Heart right ventricle (tissue), 16 donors: ENCODE measurements at regions of chr20 and their contacts with region 1.

Region 1: DNA sequence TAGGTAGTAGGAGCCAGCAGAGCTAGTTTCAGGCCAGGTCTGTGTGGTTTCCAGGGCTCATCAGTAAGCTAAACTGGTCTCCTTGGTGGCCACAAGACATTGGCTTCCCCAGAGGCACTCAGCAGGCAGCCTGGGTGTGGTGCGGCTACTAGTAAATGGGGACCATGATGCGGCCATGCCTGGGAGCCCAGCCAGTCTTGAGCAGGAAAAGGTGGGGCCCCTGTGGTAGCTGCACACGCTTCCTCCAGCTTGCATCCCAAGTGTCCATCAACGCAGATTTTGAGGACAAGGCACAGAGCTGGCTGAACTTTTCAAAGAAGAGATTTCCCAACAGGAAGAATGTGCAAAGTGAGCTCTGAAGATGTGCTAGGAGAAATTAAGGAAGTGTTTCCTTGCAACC is 107.4 kb upstream of the NAA20 start:
- DNase-seq: peak; percentile 77 to 81
- ATAC-seq: peak; percentile 83 to 94 (median 90)
- H3K4me3 ChIP-seq: no peak overlapping the region
- H3K27ac ChIP-seq: peak overlapping the region; percentile 17 to 83 (median 62)
- H3K4me1 ChIP-seq: peaks cover 5 to 86% (median 65%) of the 10 kb centered on the region in 9 donors
- H3K27me3 ChIP-seq: no peaks in the 10 kb centered on the region
- CTCF ChIP-seq: no peak

Region 2: GRCh38 chr20:19944772-19945459 is 35.2 kb after region 1 on chr20:
- intact Hi-C with region 1: loop called in 1 of 10 experiments (anchors 5 kb)
- DNase-seq: no peak
- ATAC-seq: peak in 7 of 8 donors; percentile 53 to 77 (median 67)
- H3K4me3 ChIP-seq: no peak overlapping the region
- H3K27ac ChIP-seq: peak overlapping the region; percentile 20 to 89 (median 74)
- H3K4me1 ChIP-seq: peaks cover 20 to 91% (median 71%) of the 10 kb centered on the region in 9 donors
- H3K27me3 ChIP-seq: no peaks in the 10 kb centered on the region
- CTCF ChIP-seq: no peak

Region 3: DNA sequence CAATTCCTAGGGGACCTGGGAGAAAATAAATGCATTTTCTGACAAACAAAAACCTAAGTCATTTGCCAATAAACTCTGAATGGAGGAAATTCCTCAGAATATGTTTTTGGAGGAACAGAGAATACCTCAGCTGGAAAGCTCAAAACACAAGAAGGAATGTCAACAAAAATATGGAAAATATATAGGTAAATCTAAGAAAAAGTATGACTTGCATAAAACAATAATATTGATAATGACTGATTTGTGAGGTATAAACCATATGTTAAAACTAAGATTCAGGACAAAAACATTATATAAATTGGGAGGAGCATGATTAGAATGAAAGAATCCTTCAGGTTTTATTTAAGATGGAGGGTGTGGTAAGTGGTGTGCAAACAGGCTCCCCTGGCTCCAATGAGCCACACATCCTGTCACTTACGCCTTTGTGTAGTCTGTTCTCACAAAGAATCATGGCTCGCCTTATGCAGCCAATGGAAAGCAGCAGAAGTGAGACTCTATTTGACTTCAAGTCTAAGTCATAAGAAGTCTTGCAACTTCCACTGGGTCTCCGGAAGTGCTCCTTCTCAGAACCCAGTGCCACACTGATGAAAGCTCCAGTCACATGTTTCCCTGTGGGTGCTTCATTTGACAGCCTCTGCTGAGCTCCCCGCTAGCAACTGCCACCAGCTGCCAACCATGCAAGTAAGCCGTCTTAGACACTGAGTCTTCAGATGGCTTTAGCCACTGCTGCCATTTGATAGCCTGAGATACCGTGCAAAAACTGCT is 150.7 kb after region 1 on chr20:
- intact Hi-C with region 1: no loop called
- DNase-seq: no peak
- ATAC-seq: no peak
- H3K4me3 ChIP-seq: no peak overlapping the region
- H3K27ac ChIP-seq: no peak overlapping the region
- H3K4me1 ChIP-seq: peaks cover 0 to 3% (median 0%) of the 10 kb centered on the region in 9 donors
- H3K27me3 ChIP-seq: peaks cover 0 to 15% (median 0%) of the 10 kb centered on the region in 7 donors
- CTCF ChIP-seq: no peak